OCI-LY7 (cell line): ENCODE measurements at regions of chr20 and their contacts with region 1.

Region 1: DNA sequence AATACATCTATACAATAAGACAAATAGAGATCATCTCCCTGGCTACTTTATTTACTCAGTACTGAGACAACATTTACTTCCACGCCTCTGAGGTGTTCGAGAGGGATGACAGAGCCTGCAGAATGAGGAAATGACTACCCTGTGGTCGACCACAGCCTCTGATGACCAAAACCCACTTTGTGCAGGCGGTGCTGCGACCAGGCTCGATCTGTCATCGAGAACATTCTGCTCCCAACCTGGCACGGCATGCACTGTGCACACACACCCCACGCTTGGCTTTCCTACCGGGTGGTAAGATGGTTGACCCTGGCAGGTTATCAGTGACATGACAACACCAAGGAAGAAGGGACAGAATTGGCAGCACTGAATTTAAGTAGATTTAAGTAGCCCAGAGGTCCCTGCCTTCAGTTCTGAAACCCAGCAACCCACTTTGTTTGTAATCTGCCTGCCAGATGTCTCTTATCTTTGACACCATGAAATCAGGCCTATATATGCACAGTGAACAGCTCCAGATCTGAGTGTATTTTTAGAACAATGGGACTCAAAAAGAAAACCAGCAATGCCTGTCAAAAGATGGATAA is 42.6 kb downstream of the TTI1 start:
- DNase-seq: peak; percentile 37
- H3K4me3 ChIP-seq: no peak overlapping the region
- H3K27ac ChIP-seq: no peak overlapping the region
- H3K4me1 ChIP-seq: peaks cover 19% of the 10 kb centered on the region
- CTCF ChIP-seq: no peak

Region 2: GRCh38 chr20:37564388-37565133 is 426.1 kb before region 1 on chr20:
- CTCF ChIA-PET with region 1: no interaction called
- POLR2A ChIA-PET with region 1: no interaction called
- intact Hi-C with region 1: loop called (anchors 2 kb)
- DNase-seq: peak; percentile 47
- H3K4me3 ChIP-seq: no peak overlapping the region
- H3K27ac ChIP-seq: no peak overlapping the region
- H3K4me1 ChIP-seq: peaks cover 4% of the 10 kb centered on the region
- CTCF ChIP-seq: peak; percentile 93

Region 3: GRCh38 chr20:37615340-37616109 is 375.1 kb before region 1 on chr20:
- CTCF ChIA-PET with region 1: no interaction called
- POLR2A ChIA-PET with region 1: no interaction called
- intact Hi-C with region 1: loop called (anchors 5 kb)
- DNase-seq: peak; percentile 64
- H3K4me3 ChIP-seq: no peak overlapping the region
- H3K27ac ChIP-seq: no peak overlapping the region
- H3K4me1 ChIP-seq: no peaks in the 10 kb centered on the region
- CTCF ChIP-seq: peak; percentile 90

Region 4: GRCh38 chr20:37651932-37652331 is 338.7 kb before region 1 on chr20:
- CTCF ChIA-PET with region 1: interaction called, 6 read pairs
- POLR2A ChIA-PET with region 1: no interaction called
- intact Hi-C with region 1: loop called (anchors 2 kb)
- DNase-seq: peak; percentile 44
- H3K4me3 ChIP-seq: no peak overlapping the region
- H3K27ac ChIP-seq: no peak overlapping the region
- H3K4me1 ChIP-seq: no peaks in the 10 kb centered on the region
- CTCF ChIP-seq: peak; percentile 76

Region 5: DNA sequence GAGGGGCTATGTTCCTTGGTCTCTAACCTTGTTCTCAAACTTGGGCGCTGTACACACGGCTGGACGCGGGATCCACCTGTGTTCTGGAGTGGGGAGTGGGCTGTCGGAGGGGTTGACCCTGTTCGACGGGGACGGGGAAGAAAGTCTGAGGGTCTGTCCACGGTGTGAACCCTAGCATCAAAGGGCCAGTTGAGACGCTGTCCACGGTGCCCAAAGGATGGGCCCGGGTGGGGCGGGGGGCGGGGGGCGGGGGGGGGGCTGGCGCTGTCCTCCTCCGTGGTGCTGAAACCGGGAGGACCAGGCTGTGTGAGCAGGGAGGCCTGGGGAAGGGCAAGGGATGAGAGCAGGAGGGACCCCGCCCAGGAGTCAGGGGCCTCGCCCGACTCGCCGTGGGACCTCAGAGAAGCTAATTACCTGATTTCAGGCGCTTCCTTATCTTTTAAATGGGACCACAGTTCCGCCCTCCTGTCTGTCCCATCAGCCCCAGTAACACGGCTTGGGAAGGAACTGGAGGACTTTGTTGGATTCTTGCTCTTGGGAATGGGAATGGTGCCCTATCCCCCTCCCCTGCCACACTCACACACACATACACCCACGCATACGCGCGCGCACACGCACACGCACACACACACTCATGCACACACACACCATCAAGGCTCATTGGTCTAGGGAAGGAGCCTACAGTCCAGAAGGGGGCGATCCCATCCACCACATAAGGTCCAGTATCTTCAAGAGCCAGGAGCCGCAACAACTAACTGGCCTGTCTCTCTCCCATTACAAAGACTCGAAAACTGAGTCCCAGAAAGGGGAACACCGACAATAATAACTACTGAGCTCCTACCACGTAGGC is 88.8 kb before region 1 on chr20:
- CTCF ChIA-PET with region 1: no interaction called
- POLR2A ChIA-PET with region 1: no interaction called
- intact Hi-C with region 1: loop called (anchors 2 kb)
- DNase-seq: peak; percentile 39
- H3K4me3 ChIP-seq: no peak overlapping the region
- H3K27ac ChIP-seq: no peak overlapping the region
- H3K4me1 ChIP-seq: no peaks in the 10 kb centered on the region
- CTCF ChIP-seq: peak; percentile 65